Heart left ventricle (tissue), 16 donors: ENCODE measurements at regions of chr2 and their contacts with region 1.

Region 1: GRCh38 chr2:237731663-237732062 is 66.9 kb upstream of the RBM44 start:
- DNase-seq: no peak
- ATAC-seq: peak in 3 of 4 donors; percentile 23 to 49 (median 32)
- H3K4me3 ChIP-seq: peak overlapping the region in 2 of 12 donors; percentile 20 to 48
- H3K27ac ChIP-seq: peak overlapping the region in 11 of 12 donors; percentile 78 to 86 (median 84)
- H3K4me1 ChIP-seq: peaks cover 8 to 100% (median 82%) of the 10 kb centered on the region in 12 donors
- H3K27me3 ChIP-seq: no peaks in the 10 kb centered on the region
- CTCF ChIP-seq: no peak
- POLR2A ChIP-seq: no peak

Region 2: GRCh38 chr2:237627441-237628246 is 104.0 kb before region 1 on chr2 and contains the start of gene LRRFIP1:
- intact Hi-C with region 1: loop called in 1 of 10 experiments (anchors 5 kb)
- DNase-seq: peak in 4 of 5 donors; percentile 62 to 70 (median 67)
- ATAC-seq: peak in 3 of 4 donors; percentile 52 to 81 (median 79)
- H3K4me3 ChIP-seq: peak within 1 kb of the TSS; percentile 52 to 92 (median 73)
- H3K27ac ChIP-seq: peak within 1 kb of the TSS; percentile 82 to 96 (median 90)
- H3K4me1 ChIP-seq: peaks cover 7 to 69% (median 48%) of the 10 kb centered on the region in 12 donors
- H3K27me3 ChIP-seq: peaks cover 0 to 6% (median 0%) of the 10 kb centered on the region in 9 donors
- CTCF ChIP-seq: peak in 2 of 12 donors; percentile 31 to 39
- POLR2A ChIP-seq: peak in 1 of 2 donors; percentile 36
- total RNA-seq, gene LRRFIP1: 78.7 to 151 (median 111) TPM

Region 3: GRCh38 chr2:237660380-237660904 is 71.2 kb before region 1 on chr2:
- intact Hi-C with region 1: no loop called
- DNase-seq: no peak
- ATAC-seq: no peak
- H3K4me3 ChIP-seq: no peak overlapping the region
- H3K27ac ChIP-seq: no peak overlapping the region
- H3K4me1 ChIP-seq: peaks cover 4 to 38% (median 29%) of the 10 kb centered on the region in 12 donors
- H3K27me3 ChIP-seq: no peaks in the 10 kb centered on the region
- CTCF ChIP-seq: no peak
- POLR2A ChIP-seq: no peak